ENCODE measurements at regions of chr1 and their contacts with region 1.

Region 1: GRCh38 chr1:200934676-200935245 is 40.1 kb downstream of the INAVA start:
- DNase-seq: no peak
- ATAC-seq: no peak
- H3K4me3 Mint-ChIP-seq: no peak overlapping the region
- H3K27ac Mint-ChIP-seq: no peak overlapping the region
- H3K4me1 Mint-ChIP-seq: peaks cover 2% of the 10 kb centered on the region
- H3K27me3 Mint-ChIP-seq: peaks cover 11% of the 10 kb centered on the region

Region 2: GRCh38 chr1:200588698-200589097 is 346.1 kb before region 1 on chr1:
- CTCF ChIA-PET with region 1: no interaction called
- POLR2A ChIA-PET with region 1: no interaction called
- intact Hi-C with region 1: no loop called
- DNase-seq: no peak
- ATAC-seq: no peak
- H3K4me3 Mint-ChIP-seq: no peak overlapping the region
- H3K27ac Mint-ChIP-seq: no peak overlapping the region
- H3K4me1 Mint-ChIP-seq: no peaks in the 10 kb centered on the region
- H3K27me3 Mint-ChIP-seq: no peaks in the 10 kb centered on the region

Region 3: GRCh38 chr1:200784576-200784975 is 150.2 kb before region 1 on chr1:
- CTCF ChIA-PET with region 1: no interaction called
- POLR2A ChIA-PET with region 1: no interaction called
- intact Hi-C with region 1: no loop called
- DNase-seq: no peak
- ATAC-seq: no peak
- H3K4me3 Mint-ChIP-seq: no peak overlapping the region
- H3K27ac Mint-ChIP-seq: no peak overlapping the region
- H3K4me1 Mint-ChIP-seq: no peaks in the 10 kb centered on the region
- H3K27me3 Mint-ChIP-seq: no peaks in the 10 kb centered on the region

Region 4: DNA sequence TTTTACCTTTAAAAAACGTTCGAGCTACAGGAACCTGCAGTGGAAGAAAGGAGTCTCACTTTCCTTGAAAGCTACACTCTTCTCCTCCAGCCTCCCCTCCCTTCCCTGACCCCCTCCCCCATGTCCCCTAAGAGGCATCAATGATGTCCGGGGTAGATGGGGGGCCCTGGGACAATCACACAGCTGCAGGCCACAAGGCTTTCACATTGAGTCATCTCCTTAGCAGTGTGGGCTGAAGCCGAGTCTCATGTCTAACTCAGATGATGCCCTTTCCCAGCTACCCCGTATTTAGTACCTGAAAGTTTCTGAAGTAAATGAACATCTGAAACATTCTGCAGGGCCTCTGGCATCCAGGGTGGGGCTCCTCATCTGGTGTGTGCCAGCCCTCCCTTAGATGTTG is 68.2 kb before region 1 on chr1:
- CTCF ChIA-PET with region 1: no interaction called
- POLR2A ChIA-PET with region 1: no interaction called
- intact Hi-C with region 1: loop called in 1 of 2 experiments (anchors 2 kb)
- DNase-seq: peak; percentile 75
- ATAC-seq: peak; percentile 84
- H3K4me3 Mint-ChIP-seq: no peak overlapping the region
- H3K27ac Mint-ChIP-seq: no peak overlapping the region
- H3K4me1 Mint-ChIP-seq: peaks cover 48% of the 10 kb centered on the region
- H3K27me3 Mint-ChIP-seq: peaks cover 35% of the 10 kb centered on the region

Measured in activated CD4-positive, alpha-beta T cell treated with anti-CD3 and anti-CD28 coated beads for 36 hours (primary cell).